ENCODE measurements at regions of chr3 and their contacts with region 1.

Region 1: DNA sequence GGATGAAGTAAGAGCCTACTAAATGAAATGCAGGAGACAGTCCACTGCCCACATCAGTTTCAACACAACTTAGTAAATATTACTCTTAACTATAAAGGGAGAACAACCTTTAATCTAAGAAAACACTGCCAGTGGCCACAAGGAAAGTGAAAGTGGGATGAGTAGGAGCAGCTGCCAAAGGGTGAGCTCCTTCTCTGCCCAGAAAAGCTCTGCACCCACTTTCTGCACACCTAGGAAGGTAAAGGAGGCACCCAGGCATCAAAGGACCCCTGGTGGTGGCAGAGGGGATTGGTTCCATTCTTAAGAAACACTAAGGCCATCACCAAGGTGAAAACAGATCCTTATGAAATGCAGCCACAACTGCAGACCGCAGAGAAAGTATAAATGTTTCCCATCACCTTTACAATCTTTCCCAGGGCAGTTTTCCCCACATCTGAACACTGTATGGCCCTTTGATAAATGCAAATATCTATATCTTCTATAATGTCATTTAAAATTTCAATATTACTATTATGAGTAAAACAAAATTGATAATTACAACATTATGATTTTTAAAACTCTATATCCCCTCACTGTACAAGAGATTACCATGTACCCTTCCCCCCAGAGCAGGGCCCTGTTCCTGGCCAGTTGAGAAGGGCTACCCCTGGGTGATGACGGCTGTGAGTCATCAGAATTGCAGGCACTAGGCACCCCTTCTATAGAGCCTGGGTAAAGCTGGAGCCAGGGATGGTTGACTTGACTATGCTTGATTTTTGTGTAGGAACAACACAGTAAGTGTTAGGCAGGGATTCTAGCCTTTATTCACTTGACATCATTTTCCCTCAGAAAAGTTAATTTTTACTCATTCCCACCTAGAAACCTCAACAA is 92.0 kb downstream of the SNRK start:
- DNase-seq: peak; percentile 54 to 87 (median 78)
- ATAC-seq: peak; percentile 99
- H3K4me3 ChIP-seq: no peak overlapping the region
- H3K4me3 Mint-ChIP-seq: no peak overlapping the region
- H3K27ac ChIP-seq: no peak overlapping the region
- H3K27ac Mint-ChIP-seq: peak overlapping the region; percentile 72
- H3K4me1 ChIP-seq: peaks cover 16% of the 10 kb centered on the region
- H3K4me1 Mint-ChIP-seq: peaks cover 31% of the 10 kb centered on the region
- H3K27me3 ChIP-seq: no peaks in the 10 kb centered on the region
- H3K27me3 Mint-ChIP-seq: no peaks in the 10 kb centered on the region
- CTCF ChIP-seq: peak; percentile 79

Region 2: GRCh38 chr3:42314411-42314810 is 1063.9 kb before region 1 on chr3:
- CTCF ChIA-PET with region 1: no interaction called
- POLR2A ChIA-PET with region 1: no interaction called
- intact Hi-C with region 1: no loop called
- DNase-seq: no peak
- ATAC-seq: no peak
- H3K4me3 ChIP-seq: no peak overlapping the region
- H3K4me3 Mint-ChIP-seq: no peak overlapping the region
- H3K27ac ChIP-seq: no peak overlapping the region
- H3K27ac Mint-ChIP-seq: no peak overlapping the region
- H3K4me1 ChIP-seq: no peaks in the 10 kb centered on the region
- H3K4me1 Mint-ChIP-seq: no peaks in the 10 kb centered on the region
- H3K27me3 ChIP-seq: no peaks in the 10 kb centered on the region
- H3K27me3 Mint-ChIP-seq: no peaks in the 10 kb centered on the region
- CTCF ChIP-seq: no peak

Region 3: DNA sequence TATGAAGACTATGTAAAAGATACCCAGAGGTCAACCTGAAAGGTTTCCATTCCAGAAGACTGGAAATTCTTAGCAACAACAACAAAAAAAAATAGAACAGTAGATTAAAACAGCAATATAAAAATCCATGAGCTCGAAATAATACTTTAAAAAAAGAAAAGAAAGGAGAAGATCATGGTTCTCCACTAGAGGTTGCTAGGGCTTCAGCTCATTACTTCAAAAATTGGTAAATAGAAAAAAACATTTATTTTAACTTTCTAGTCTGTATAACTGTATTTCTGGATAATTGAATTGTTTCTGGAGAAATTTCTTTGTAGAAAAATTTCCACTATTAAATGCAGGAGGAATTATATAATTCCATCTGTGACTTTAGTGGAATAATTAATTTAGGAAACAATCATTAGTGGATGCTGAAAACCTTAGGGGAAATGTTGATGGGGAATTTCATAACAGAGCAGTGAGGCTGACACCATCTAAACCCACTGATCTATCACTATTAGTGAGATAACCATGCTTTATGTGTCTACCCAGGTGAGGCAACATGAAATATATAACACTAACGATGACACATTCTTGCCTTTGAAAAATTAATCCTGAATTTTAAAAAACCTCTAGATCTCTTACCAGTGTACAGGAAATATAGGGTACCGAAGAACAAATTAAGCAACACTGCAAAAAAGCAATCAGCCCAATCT is 154.5 kb before region 1 on chr3:
- CTCF ChIA-PET with region 1: interaction called, 16 read pairs
- POLR2A ChIA-PET with region 1: interaction called, 4 read pairs
- intact Hi-C with region 1: loop called (anchors 1 kb)
- DNase-seq: peak in 2 of 9 experiments; percentile 50 to 58
- ATAC-seq: peak; percentile 30
- H3K4me3 ChIP-seq: no peak overlapping the region
- H3K4me3 Mint-ChIP-seq: no peak overlapping the region
- H3K27ac ChIP-seq: no peak overlapping the region
- H3K27ac Mint-ChIP-seq: peak overlapping the region; percentile 81
- H3K4me1 ChIP-seq: peaks cover 58% of the 10 kb centered on the region
- H3K4me1 Mint-ChIP-seq: peaks cover 64% of the 10 kb centered on the region
- H3K27me3 ChIP-seq: no peaks in the 10 kb centered on the region
- H3K27me3 Mint-ChIP-seq: no peaks in the 10 kb centered on the region
- CTCF ChIP-seq: peak; percentile 78

Region 4: DNA sequence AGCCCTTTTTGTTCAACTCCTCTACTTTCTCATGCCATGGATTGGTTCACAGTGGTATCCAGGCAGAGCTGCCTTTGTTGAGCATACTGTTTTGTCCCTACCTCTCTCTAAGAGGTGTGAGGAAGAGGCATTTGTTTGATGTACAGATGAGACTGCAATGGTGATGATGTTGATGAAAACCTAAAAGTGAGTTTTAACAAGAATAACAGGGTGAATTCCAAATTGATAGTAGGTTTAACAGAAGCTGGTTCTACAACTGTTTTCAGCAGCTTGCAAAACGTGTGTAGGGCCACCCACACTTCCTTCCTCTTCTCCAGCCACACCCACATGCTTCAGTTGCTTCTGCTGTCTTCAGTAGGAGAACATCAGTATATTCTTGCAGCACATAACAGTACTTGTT is 81.7 kb before region 1 on chr3:
- CTCF ChIA-PET with region 1: interaction called, 15 read pairs
- POLR2A ChIA-PET with region 1: interaction called, 4 read pairs
- intact Hi-C with region 1: no loop called
- DNase-seq: peak; percentile 22 to 92 (median 68)
- ATAC-seq: peak; percentile 88
- H3K4me3 ChIP-seq: peak overlapping the region; percentile 30 to 45
- H3K4me3 Mint-ChIP-seq: peak overlapping the region; percentile 87
- H3K27ac ChIP-seq: peak overlapping the region; percentile 57 to 87
- H3K27ac Mint-ChIP-seq: peak overlapping the region; percentile 96
- H3K4me1 ChIP-seq: peaks cover 89% of the 10 kb centered on the region
- H3K4me1 Mint-ChIP-seq: peaks cover 85% of the 10 kb centered on the region
- H3K27me3 ChIP-seq: no peaks in the 10 kb centered on the region
- H3K27me3 Mint-ChIP-seq: no peaks in the 10 kb centered on the region
- CTCF ChIP-seq: no peak

Region 5: DNA sequence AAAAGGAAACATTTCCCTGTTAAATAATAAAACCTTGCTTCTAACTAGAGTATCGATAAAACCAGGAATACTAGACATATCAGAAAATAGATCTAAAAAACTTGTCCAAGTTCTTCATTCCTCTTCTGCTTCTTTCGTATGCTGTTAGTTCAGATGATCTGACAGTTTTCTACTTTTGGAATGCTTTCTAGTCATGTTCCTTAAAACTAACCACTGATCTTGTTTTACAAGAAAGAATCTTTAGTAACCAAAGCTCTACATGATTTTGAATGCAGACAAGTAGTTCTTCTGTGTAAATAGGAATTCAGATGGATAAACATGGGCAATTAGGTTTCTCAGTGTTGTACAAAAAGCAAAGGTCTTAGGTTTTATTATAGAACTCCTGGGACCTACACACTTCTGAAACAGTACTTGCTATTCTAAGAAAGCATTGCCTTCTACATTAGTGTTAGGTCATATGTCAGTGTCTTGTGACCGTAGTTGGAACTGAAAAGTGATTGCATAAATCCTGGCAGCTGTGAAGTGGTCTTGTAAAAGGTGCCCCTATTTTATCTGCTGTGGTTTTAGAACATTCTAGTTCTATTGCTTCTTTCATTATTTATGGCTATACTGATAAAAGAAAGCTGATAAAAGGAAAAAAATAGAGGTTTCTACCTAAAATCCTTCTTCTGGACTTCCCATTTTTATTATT is 51.3 kb before region 1 on chr3:
- CTCF ChIA-PET with region 1: interaction called, 7 read pairs
- POLR2A ChIA-PET with region 1: no interaction called
- intact Hi-C with region 1: loop called in 1 of 2 experiments (anchors 10 kb)
- DNase-seq: peak in 1 of 9 experiments; percentile 51
- ATAC-seq: peak; percentile 73
- H3K4me3 ChIP-seq: no peak overlapping the region
- H3K4me3 Mint-ChIP-seq: peak overlapping the region; percentile 54
- H3K27ac ChIP-seq: peak overlapping the region; percentile 1 to 31
- H3K27ac Mint-ChIP-seq: peak overlapping the region; percentile 88
- H3K4me1 ChIP-seq: peaks cover 75% of the 10 kb centered on the region
- H3K4me1 Mint-ChIP-seq: peaks cover 88% of the 10 kb centered on the region
- H3K27me3 ChIP-seq: no peaks in the 10 kb centered on the region
- H3K27me3 Mint-ChIP-seq: no peaks in the 10 kb centered on the region
- CTCF ChIP-seq: no peak

Region 6: GRCh38 chr3:43503067-43503728 is 124.9 kb after region 1 on chr3:
- CTCF ChIA-PET with region 1: interaction called, 52 read pairs
- POLR2A ChIA-PET with region 1: interaction called, 3 read pairs
- intact Hi-C with region 1: loop called (anchors 1 to 2 kb)
- DNase-seq: peak in 2 of 9 experiments; percentile 57 to 72
- ATAC-seq: peak; percentile 60
- H3K4me3 ChIP-seq: no peak overlapping the region
- H3K4me3 Mint-ChIP-seq: no peak overlapping the region
- H3K27ac ChIP-seq: no peak overlapping the region
- H3K27ac Mint-ChIP-seq: no peak overlapping the region
- H3K4me1 ChIP-seq: peaks cover 42% of the 10 kb centered on the region
- H3K4me1 Mint-ChIP-seq: peaks cover 54% of the 10 kb centered on the region
- H3K27me3 ChIP-seq: no peaks in the 10 kb centered on the region
- H3K27me3 Mint-ChIP-seq: no peaks in the 10 kb centered on the region
- CTCF ChIP-seq: peak; percentile 65

Region 7: DNA sequence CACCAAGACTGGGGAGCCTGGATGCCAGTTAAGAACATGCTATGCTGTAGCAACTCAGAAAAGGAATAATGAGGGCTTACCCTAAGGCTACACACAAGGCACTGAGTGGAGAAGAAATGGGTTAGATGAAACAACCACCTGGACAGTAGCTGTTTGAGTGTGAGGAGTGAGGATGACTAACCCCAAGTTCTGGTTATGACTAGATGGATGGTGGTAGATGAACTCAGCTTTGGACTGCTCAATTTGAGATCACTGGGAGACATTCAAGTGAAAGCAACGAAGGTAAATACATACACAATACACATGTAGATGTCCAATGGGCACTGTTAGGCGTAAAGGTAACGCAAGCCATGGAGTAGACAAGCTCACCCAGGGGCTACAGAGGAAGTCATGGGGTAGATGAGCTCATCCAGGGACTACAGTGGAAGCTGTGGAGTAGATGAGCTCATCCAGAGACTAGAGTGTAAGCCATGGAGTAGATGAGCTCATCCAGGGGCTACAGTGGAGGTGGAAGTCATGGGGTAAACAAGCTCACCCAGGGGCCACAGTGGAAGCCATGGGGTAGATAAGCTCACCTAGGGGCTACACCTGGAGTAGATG is 145.3 kb after region 1 on chr3:
- CTCF ChIA-PET with region 1: no interaction called
- POLR2A ChIA-PET with region 1: no interaction called
- intact Hi-C with region 1: no loop called
- DNase-seq: no peak
- ATAC-seq: no peak
- H3K4me3 ChIP-seq: no peak overlapping the region
- H3K4me3 Mint-ChIP-seq: no peak overlapping the region
- H3K27ac ChIP-seq: no peak overlapping the region
- H3K27ac Mint-ChIP-seq: no peak overlapping the region
- H3K4me1 ChIP-seq: no peaks in the 10 kb centered on the region
- H3K4me1 Mint-ChIP-seq: no peaks in the 10 kb centered on the region
- H3K27me3 ChIP-seq: no peaks in the 10 kb centered on the region
- H3K27me3 Mint-ChIP-seq: no peaks in the 10 kb centered on the region
- CTCF ChIP-seq: no peak

Measured in CD8-positive, alpha-beta T cell (primary cell).